Common myeloid progenitor, CD34-positive (primary cell): ENCODE measurements at regions of chr14 and their contacts with region 1.

Region 1: GRCh38 chr14:52043690-52044089 is 25.2 kb downstream of the NID2 start:
- DNase-seq: peak; percentile 11 to 42 (median 33)
- H3K4me3 ChIP-seq: no peak overlapping the region
- H3K27ac ChIP-seq: no peak overlapping the region
- H3K4me1 ChIP-seq: no peaks in the 10 kb centered on the region
- H3K27me3 ChIP-seq: peaks cover 0 to 6% (median 0%) of the 10 kb centered on the region in 5 experiments

Region 2: DNA sequence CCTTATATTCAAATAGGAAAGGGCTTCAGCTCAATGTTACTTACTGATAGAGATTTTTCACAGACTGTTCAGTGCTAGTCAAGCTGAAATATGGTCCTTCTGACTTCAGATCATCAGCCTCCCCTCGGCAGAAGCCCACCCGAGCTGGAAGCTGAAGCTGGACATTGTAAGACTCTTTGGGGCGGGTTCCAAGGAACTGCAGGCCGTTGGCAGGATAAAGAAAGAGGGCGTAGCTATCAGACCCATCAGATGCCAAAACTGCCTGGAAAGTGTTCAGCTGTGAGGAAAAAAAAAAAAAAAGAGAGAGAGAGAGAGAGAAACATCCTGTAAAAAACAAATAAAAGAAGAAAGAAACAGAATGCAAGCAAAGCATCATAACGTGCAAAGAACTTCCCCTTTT is 16.4 kb after region 1 on chr14:
- CTCF ChIA-PET with region 1: interaction called, 13 read pairs
- POLR2A ChIA-PET with region 1: no interaction called
- DNase-seq: peak in 1 of 3 donors; percentile 52
- H3K4me3 ChIP-seq: no peak overlapping the region
- H3K27ac ChIP-seq: no peak overlapping the region
- H3K4me1 ChIP-seq: peaks cover 0 to 7% (median 3%) of the 10 kb centered on the region in 4 experiments
- H3K27me3 ChIP-seq: peaks cover 0 to 2% (median 0%) of the 10 kb centered on the region in 5 experiments

Region 3: GRCh38 chr14:52068615-52069303 is 25.1 kb after region 1 on chr14 and contains the start of gene NID2:
- CTCF ChIA-PET with region 1: interaction called, 11 read pairs
- POLR2A ChIA-PET with region 1: no interaction called
- DNase-seq: peak in 2 of 3 donors; percentile 71 to 72
- H3K4me3 ChIP-seq: peak within 1 kb of the TSS; percentile 33 to 71 (median 56)
- H3K27ac ChIP-seq: no peak within 1 kb of the TSS
- H3K4me1 ChIP-seq: peaks cover 0 to 27% (median 26%) of the 10 kb centered on the region in 4 experiments
- H3K27me3 ChIP-seq: peaks cover 10 to 65% (median 26%) of the 10 kb centered on the region in 5 experiments